WTC11 (cell line): ENCODE measurements at regions of chr16 and their contacts with region 1.

Region 1: GRCh38 chr16:55257966-55258613 is 65.9 kb upstream of the IRX6 start:
- DNase-seq: peak; percentile 84
- ATAC-seq: peak; percentile 95
- H3K4me3 Mint-ChIP-seq: no peak overlapping the region
- H3K27ac Mint-ChIP-seq: no peak overlapping the region
- H3K4me1 Mint-ChIP-seq: no peaks in the 10 kb centered on the region
- H3K27me3 Mint-ChIP-seq: no peaks in the 10 kb centered on the region
- CTCF ChIP-seq: peak; percentile 91

Region 2: DNA sequence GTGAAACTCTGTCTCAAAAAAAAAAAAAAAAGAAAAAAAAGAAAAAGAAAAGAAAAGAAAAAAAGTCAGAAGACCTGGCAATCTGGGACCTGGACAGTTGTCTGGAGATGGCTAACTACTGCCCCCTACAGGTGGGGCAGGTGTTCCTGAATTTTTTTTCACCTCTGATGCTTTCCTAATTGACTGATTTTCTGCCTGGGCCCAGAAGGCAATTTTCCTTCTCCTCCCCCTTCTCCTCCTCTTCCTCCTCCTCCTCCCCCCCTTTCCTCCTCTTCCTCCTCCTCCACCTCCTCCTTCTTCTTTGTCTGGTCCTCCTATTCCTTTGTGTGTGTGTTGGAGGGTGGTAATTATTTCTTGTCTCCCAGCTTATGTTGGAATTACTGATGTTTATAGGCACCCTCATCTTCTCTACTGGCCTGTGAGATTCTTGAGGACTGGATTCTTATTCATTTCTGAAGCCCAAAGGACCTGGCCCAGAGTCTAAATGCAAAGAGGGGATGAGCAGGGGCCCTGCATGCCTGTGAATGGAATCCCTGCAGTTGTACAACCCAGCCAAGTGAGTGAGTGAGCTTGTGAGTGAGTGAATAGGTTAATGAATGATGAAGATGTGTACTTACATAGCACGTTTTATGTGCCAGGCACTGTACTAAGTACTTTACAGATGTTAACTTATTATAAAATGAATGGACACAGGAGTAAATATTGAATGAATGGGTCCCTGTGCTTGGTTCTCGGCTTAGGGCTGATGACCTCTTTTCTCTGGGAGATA is 300.5 kb before region 1 on chr16:
- CTCF ChIA-PET with region 1: interaction called, 12 read pairs
- POLR2A ChIA-PET with region 1: no interaction called
- DNase-seq: peak; percentile 61
- ATAC-seq: no peak
- H3K4me3 Mint-ChIP-seq: no peak overlapping the region
- H3K27ac Mint-ChIP-seq: no peak overlapping the region
- H3K4me1 Mint-ChIP-seq: peaks cover 2% of the 10 kb centered on the region
- H3K27me3 Mint-ChIP-seq: peaks cover 4% of the 10 kb centered on the region
- CTCF ChIP-seq: peak; percentile 61

Region 3: DNA sequence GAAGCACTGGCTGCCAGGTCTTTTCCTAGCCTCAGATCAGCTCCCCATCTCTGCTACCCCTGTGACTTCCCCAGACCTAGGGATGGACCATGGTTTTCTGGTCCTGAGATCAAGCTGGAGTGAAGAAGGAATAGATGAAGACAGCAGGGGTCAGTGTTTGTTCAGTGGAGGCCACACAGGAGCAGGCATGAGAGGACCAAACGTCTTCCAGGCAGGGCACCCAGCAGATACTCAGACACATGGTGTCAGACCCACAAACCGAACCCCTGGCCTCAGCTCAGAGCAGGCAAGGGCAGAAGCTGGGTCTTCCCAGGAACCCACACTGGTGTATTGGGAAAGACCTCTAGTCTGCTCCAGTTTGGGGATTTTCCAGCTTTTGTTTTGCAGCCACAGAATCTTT is 137.7 kb before region 1 on chr16:
- CTCF ChIA-PET with region 1: interaction called, 16 read pairs
- POLR2A ChIA-PET with region 1: no interaction called
- DNase-seq: peak; percentile 16
- ATAC-seq: peak; percentile 51
- H3K4me3 Mint-ChIP-seq: no peak overlapping the region
- H3K27ac Mint-ChIP-seq: no peak overlapping the region
- H3K4me1 Mint-ChIP-seq: no peaks in the 10 kb centered on the region
- H3K27me3 Mint-ChIP-seq: no peaks in the 10 kb centered on the region
- CTCF ChIP-seq: no peak

Region 4: GRCh38 chr16:55189682-55190636 is 68.1 kb before region 1 on chr16:
- CTCF ChIA-PET with region 1: interaction called, 11 read pairs
- POLR2A ChIA-PET with region 1: no interaction called
- DNase-seq: peak; percentile 16
- ATAC-seq: peak; percentile 79
- H3K4me3 Mint-ChIP-seq: peak overlapping the region; percentile 40
- H3K27ac Mint-ChIP-seq: no peak overlapping the region
- H3K4me1 Mint-ChIP-seq: peaks cover 21% of the 10 kb centered on the region
- H3K27me3 Mint-ChIP-seq: no peaks in the 10 kb centered on the region; the same call in 1 of the 2 replicates
- CTCF ChIP-seq: no peak

Region 5: GRCh38 chr16:55364811-55365210 is 106.7 kb after region 1 on chr16:
- CTCF ChIA-PET with region 1: no interaction called
- POLR2A ChIA-PET with region 1: no interaction called
- DNase-seq: no peak
- ATAC-seq: no peak
- H3K4me3 Mint-ChIP-seq: no peak overlapping the region
- H3K27ac Mint-ChIP-seq: no peak overlapping the region
- H3K4me1 Mint-ChIP-seq: peaks cover 5% of the 10 kb centered on the region; the same call in 1 of the 2 replicates
- H3K27me3 Mint-ChIP-seq: peaks cover 3% of the 10 kb centered on the region; the same call in 1 of the 2 replicates
- CTCF ChIP-seq: no peak